ENCODE measurements at regions of chr18 and their contacts with region 1.

Region 1: GRCh38 chr18:74551936-74552555 is 17.7 kb downstream of the CNDP1 start:
- DNase-seq: peak; percentile 82
- CTCF ChIP-seq: peak; percentile 79

Region 2: GRCh38 chr18:74337155-74337911 is 214.7 kb before region 1 on chr18:
- CTCF ChIA-PET with region 1: interaction called, 11 read pairs
- POLR2A ChIA-PET with region 1: no interaction called
- DNase-seq: no peak
- CTCF ChIP-seq: no peak

Region 3: GRCh38 chr18:74353169-74353775 is 198.8 kb before region 1 on chr18:
- CTCF ChIA-PET with region 1: interaction called, 46 read pairs
- POLR2A ChIA-PET with region 1: no interaction called
- DNase-seq: peak; percentile 37
- CTCF ChIP-seq: peak; percentile 69

Region 4: GRCh38 chr18:74541703-74542555 is 10.1 kb before region 1 on chr18:
- CTCF ChIA-PET with region 1: interaction called, 12 read pairs
- POLR2A ChIA-PET with region 1: no interaction called
- DNase-seq: no peak
- CTCF ChIP-seq: no peak

Region 5: DNA sequence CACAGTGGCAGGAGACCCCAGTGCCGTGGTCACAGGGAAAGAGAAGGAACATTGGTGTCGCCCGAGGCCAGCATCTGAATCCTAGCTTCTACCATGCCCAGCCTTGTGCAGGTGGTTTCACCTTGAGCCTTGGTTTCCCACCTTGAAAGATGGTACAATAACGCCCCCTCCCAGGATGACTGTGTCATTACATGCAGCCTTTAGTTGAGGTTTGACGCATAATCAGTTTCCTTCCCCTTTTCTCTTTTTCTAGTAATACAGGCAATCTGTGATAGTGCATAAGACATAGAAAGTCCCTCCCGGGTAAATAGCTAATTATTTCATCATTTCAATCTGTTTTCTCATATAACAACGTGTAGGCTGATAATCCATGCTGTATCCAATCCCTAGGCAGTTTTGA is 15.8 kb after region 1 on chr18:
- CTCF ChIA-PET with region 1: interaction called, 11 read pairs
- POLR2A ChIA-PET with region 1: no interaction called
- DNase-seq: no peak
- CTCF ChIP-seq: no peak